ENCODE measurements at regions of chr6 and their contacts with region 1.

Region 1: GRCh38 chr6:26613689-26614683 is 17.2 kb downstream of the ABT1 start:
- DNase-seq: no peak
- H3K4me3 ChIP-seq: no peak overlapping the region
- H3K27ac ChIP-seq: no peak overlapping the region
- H3K4me1 ChIP-seq: no peaks in the 10 kb centered on the region
- H3K27me3 ChIP-seq: peaks cover 18% of the 10 kb centered on the region
- CTCF ChIP-seq: no peak

Region 2: DNA sequence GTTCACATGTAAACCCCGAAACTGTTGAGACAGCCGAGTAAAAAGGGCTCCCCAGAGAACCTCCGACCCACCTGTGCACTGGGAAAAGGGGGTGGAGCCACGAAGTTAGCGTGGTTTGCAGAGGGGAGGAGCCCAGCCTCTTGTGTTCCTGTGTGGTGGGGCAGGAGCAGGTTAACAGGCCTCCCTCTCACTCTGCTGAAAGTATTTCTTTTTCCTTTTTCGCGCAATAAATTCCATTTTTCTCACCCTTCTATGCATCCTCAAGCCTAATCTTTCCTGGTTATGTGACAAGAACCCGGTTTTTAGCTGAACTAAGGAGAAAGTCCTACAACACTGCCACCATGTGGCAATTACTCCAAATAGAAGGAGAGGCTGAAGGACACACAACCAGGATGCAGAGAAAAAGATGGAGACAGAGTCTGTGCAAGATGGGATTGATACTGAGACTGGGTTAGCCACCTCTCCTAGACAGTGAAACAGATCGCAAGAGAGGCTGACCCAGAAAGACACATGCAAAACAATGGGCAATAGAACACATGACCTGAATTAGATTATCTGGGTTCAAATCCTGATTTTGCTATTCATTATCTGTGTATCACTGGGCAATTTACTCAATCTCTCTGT is 464.9 kb after region 1 on chr6:
- CTCF ChIA-PET with region 1: no interaction called
- dilution Hi-C with region 1: no loop called
- in situ Hi-C with region 1: loop called in 1 of 2 experiments (anchors 5 kb)
- intact Hi-C with region 1: no loop called
- DNase-seq: peak; percentile 58
- H3K4me3 ChIP-seq: peak overlapping the region; percentile 49 to 55 (median 52)
- H3K27ac ChIP-seq: no peak overlapping the region
- H3K4me1 ChIP-seq: peaks cover 4% of the 10 kb centered on the region
- H3K27me3 ChIP-seq: no peaks in the 10 kb centered on the region
- CTCF ChIP-seq: peak; percentile 69 to 81